Activated CD8-positive, alpha-beta T cell treated with anti-CD3 and anti-CD28 coated beads for 36 hours (primary cell): ENCODE measurements at regions of chr6 and their contacts with region 1.

Region 1: DNA sequence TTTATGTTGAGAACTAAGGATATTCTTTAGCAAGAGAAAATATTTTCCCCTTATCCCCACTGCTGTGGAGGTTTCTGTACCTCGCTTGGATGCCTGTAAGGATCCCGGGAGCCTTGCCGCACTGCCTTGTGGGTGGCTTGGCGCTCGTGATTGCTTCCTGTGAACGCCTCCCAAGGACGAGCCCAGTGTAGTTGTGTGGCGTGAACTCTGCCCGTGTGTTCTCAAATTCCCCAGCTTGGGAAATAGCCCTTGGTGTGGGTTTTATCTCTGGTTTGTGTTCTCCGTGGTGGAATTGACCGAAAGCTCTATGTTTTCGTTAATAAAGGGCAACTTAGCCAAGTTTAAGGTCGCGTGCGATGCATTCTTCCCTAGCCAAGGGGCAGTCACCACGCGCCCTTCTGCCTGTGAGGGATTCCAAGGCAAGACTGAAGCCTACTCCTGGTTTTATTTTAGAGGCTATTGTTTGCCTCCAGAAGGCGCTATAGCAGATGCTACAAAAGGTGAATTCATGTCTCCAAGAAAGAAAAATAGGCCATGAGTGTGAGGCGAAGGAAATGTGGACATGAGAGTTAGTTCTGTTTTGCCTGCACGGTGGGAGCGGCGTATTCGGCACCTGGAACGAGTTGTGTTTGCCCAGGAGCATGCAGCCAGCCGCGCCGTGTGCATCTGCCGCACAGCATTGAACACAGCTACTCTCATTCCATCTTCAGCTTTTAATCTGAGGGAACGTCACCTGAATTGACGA is 40.4 kb upstream of the IRF4 start:
- DNase-seq: no peak
- ATAC-seq: no peak
- H3K4me3 Mint-ChIP-seq: no peak overlapping the region
- H3K27ac Mint-ChIP-seq: no peak overlapping the region
- H3K4me1 Mint-ChIP-seq: peaks cover 3% of the 10 kb centered on the region
- H3K27me3 Mint-ChIP-seq: no peaks in the 10 kb centered on the region
- CTCF ChIP-seq: no peak

Region 2: DNA sequence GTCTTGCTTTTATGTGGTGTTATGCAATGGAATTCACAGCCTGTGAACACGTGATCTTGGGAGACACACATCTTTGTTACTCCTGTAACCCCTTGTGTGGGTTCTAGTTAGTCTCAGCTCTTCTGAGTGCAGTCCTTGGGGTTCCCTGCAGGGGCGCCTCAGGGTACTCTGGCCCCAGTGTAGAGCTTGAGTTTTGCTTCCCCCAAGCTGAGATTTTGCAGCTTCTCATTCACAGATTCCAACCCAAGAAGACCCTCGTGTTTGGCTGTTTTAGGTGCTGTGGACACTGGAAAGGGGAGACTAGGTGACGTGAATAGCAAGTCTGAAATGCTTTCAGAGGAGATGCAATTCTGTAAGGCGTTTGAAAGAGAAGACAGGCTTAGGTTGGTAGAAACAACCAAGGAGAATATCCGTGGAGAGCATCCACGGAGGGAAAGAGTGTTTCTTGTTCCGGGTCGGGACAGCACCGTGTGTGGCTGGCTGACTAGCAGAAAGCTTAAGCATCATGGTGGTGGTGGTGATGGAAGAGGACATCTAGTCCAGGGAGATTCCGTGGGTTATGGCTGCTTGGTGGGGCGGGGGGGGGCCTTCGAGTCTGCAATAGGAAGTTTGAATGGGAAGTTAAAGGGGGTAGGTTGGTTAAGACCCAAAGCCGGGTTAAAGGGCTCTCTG is 28.8 kb before region 1 on chr6:
- CTCF ChIA-PET with region 1: no interaction called
- POLR2A ChIA-PET with region 1: no interaction called
- intact Hi-C with region 1: no loop called
- DNase-seq: no peak
- ATAC-seq: peak; percentile 56
- H3K4me3 Mint-ChIP-seq: no peak overlapping the region
- H3K27ac Mint-ChIP-seq: no peak overlapping the region
- H3K4me1 Mint-ChIP-seq: peaks cover 11% of the 10 kb centered on the region
- H3K27me3 Mint-ChIP-seq: no peaks in the 10 kb centered on the region
- CTCF ChIP-seq: no peak

Region 3: DNA sequence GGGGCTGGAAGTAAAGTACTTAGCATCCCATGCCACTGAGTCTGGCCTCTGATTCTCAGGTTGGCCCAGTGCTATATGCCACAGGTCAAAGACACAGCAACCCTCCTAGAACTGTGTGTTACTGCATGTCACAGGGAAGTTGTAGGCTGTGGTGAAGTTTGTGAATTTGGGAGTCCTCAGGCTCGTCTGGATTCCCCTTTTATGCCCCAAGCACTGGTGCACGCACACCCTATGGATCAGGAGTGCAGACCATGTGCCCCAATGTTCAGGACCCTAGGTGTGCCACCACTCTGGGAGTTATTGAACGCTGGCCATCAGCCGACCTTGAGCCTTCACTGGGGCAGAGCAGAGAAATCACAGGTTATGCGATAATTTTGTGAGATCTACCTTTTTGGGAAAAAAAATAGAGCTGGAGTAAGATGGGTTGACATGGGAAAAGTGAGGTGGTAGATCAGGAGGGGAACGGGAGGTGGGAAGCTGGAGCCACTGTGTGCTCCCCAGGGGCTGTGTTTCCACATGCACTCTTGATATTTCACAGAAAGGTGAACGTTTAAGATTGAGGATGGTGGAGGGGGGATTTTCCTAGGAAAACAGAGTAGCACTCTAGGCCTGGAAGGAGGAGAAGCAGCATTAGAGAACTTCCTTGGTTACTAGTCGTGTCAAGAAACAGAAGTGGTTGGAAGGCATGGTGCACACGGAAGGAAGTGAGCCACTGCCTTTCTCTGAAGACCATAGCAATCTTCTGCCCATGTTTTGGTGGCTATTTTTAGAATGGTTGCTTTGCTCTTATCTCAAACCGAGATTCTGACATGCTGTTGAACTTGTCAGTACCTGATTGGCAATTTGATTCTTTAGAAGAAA is 14.8 kb before region 1 on chr6:
- CTCF ChIA-PET with region 1: interaction called, 10 read pairs
- POLR2A ChIA-PET with region 1: interaction called, 3 read pairs
- intact Hi-C with region 1: no loop called
- DNase-seq: peak; percentile 28
- ATAC-seq: peak; percentile 8
- H3K4me3 Mint-ChIP-seq: peak overlapping the region; percentile 9
- H3K27ac Mint-ChIP-seq: peak overlapping the region; percentile 90
- H3K4me1 Mint-ChIP-seq: peaks cover 58% of the 10 kb centered on the region
- H3K27me3 Mint-ChIP-seq: no peaks in the 10 kb centered on the region
- CTCF ChIP-seq: no peak

Region 4: DNA sequence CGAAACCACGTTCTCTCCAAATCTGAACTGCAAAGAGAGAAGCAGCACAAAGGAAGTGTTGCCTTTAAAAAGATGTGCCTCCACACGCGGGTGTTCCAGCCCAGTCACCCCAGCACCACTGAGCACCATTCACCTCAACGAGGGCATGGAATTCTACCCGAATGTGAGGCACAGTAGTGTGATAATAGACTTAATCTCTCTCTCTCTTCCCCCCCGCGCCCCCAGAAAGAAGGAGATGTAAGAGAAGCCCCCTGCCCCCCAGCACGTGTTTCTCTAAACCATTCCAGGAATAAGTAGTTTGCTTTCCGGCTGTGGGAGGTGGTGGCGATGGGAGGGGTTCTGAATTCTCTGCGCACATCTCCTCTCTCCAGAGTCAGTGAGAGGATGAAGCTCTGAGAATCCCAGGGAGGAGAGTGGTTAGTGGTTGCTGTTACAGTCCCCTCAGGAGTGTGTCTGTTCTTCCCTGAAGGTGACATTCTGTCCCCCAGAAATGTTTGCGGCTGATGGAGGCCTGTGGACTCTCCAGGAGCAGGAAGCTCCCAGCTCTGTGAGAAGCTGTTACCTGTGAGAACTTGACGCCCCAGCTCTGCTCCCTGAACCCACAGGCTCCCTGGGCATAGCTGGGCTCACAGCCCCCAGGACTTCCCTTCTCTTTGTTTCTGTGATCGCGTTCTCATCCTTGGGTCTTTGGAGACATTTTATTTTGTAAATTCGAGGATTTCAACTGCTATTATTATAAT is 16.9 kb after region 1 on chr6:
- CTCF ChIA-PET with region 1: no interaction called
- POLR2A ChIA-PET with region 1: no interaction called
- intact Hi-C with region 1: no loop called
- DNase-seq: no peak
- ATAC-seq: no peak
- H3K4me3 Mint-ChIP-seq: no peak overlapping the region
- H3K27ac Mint-ChIP-seq: no peak overlapping the region
- H3K4me1 Mint-ChIP-seq: no peaks in the 10 kb centered on the region
- H3K27me3 Mint-ChIP-seq: peaks cover 13% of the 10 kb centered on the region
- CTCF ChIP-seq: no peak

Region 5: GRCh38 chr6:408599-409102 is 57.5 kb after region 1 on chr6:
- CTCF ChIA-PET with region 1: no interaction called
- POLR2A ChIA-PET with region 1: no interaction called
- intact Hi-C with region 1: no loop called
- DNase-seq: no peak
- ATAC-seq: no peak
- H3K4me3 Mint-ChIP-seq: no peak overlapping the region
- H3K27ac Mint-ChIP-seq: peak overlapping the region; percentile 77
- H3K4me1 Mint-ChIP-seq: peaks cover 64% of the 10 kb centered on the region
- H3K27me3 Mint-ChIP-seq: no peaks in the 10 kb centered on the region
- CTCF ChIP-seq: peak; percentile 41

Region 6: DNA sequence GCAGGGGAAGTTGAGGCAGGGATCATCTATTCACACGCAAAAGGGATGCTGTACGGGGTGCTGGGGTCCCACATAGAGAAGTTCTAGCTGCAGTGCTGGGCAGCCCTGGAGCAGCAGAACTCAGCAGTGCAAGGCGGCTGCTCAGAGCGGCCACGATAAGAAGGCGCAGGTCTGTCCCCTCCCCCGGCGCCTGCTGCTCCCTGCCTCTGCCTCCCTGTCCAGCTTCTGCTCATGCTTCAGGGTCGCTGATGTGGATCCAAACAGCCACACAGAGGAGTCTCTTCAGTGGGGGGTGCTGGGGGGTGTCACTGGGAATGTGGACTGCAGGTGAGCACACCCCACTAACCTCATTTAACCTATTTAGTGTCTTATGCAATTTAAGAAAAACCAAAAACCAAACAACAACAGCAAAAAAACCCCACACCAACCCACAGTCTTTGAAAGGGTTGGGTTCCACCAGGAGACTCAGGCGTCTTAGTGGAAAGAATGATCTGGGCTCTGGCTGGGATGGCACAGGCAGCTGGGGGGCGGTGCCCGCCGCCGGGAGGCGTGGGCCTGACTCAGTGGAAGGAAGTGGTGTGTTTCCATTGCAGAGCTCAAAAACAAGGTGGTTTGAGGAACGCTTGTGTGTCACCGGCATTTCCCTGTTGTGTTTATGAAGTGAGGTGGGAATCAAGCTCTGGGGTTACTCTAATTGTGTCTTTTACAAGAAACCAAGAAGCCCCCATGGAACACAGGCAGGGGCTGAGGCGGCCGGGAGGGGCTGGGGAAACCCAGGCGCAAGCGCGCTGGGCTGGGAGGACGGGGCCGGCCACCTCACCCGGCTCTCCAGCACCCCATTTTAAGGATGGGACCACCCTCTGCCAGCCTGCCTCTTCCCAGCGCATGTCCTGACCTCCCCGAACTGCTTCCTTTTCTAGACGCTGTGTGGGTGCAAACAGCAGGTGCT is 95.5 kb after region 1 on chr6:
- CTCF ChIA-PET with region 1: no interaction called
- POLR2A ChIA-PET with region 1: no interaction called
- intact Hi-C with region 1: no loop called
- DNase-seq: peak; percentile 97
- ATAC-seq: peak; percentile 78
- H3K4me3 Mint-ChIP-seq: peak overlapping the region; percentile 68
- H3K27ac Mint-ChIP-seq: peak overlapping the region; percentile 97
- H3K4me1 Mint-ChIP-seq: peaks cover 48% of the 10 kb centered on the region
- H3K27me3 Mint-ChIP-seq: no peaks in the 10 kb centered on the region
- CTCF ChIP-seq: no peak